Mammary epithelial cell (primary cell): ENCODE measurements at regions of chr4 and their contacts with region 1.

Region 1: DNA sequence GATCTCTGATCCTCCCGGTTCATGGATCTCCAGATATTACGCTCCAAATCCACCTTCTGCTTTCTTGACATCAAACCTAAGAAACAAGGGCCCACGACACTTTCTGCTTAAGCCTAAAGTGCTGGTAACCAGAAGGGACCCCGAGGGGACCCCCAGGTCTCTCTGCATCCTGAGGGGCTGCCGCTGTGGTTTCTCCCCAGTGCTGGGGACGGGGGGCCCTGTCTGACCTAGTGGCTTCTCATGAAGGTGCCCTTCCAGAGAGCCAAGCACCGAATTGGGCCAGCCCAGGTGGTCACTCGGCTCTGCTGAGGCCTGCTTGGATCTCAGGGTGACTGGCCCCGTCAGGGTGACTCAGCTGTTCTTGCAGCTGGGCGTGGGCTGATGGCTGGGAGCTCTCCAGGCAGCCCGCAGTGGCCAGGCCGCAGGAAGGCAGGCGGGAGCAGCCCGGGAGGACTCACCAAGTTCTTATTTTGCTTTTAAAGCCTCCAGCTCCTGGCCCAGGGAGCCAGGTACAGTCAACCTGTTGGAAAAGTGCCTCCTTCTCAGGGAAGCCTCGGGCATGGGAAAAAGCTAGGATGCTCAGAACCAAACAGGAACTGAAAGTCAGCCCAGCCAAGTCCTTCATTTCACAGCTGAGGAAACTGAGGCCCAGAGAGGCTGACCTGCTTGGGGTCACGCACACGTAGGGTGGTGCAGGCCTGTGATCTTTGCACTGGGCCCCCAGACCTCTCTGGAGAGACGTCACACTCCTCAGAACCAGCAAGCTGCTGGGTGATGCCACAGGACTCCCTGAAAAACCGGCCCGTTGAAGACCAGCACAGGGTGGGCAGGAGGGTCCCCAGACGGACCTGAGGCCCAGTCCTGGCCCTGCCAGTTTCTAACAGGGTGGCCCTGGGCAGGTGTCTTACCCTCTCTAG is 16.7 kb downstream of the BLOC1S4 start:
- DNase-seq: peak; percentile 86
- H3K4me3 ChIP-seq: no peak overlapping the region
- H3K27ac ChIP-seq: peak overlapping the region; percentile 70
- H3K4me1 ChIP-seq: peaks cover 13% of the 10 kb centered on the region
- H3K27me3 ChIP-seq: no peaks in the 10 kb centered on the region
- CTCF ChIP-seq: peak in 1 of 2 donors; percentile 22

Region 2: GRCh38 chr4:6390356-6390755 is 342.3 kb before region 1 on chr4:
- CTCF ChIA-PET with region 1: no interaction called
- dilution Hi-C with region 1: no loop called
- in situ Hi-C with region 1: no loop called
- intact Hi-C with region 1: no loop called
- DNase-seq: no peak
- H3K4me3 ChIP-seq: no peak overlapping the region
- H3K27ac ChIP-seq: no peak overlapping the region
- H3K4me1 ChIP-seq: peaks cover 10% of the 10 kb centered on the region
- H3K27me3 ChIP-seq: no peaks in the 10 kb centered on the region
- CTCF ChIP-seq: no peak

Region 3: DNA sequence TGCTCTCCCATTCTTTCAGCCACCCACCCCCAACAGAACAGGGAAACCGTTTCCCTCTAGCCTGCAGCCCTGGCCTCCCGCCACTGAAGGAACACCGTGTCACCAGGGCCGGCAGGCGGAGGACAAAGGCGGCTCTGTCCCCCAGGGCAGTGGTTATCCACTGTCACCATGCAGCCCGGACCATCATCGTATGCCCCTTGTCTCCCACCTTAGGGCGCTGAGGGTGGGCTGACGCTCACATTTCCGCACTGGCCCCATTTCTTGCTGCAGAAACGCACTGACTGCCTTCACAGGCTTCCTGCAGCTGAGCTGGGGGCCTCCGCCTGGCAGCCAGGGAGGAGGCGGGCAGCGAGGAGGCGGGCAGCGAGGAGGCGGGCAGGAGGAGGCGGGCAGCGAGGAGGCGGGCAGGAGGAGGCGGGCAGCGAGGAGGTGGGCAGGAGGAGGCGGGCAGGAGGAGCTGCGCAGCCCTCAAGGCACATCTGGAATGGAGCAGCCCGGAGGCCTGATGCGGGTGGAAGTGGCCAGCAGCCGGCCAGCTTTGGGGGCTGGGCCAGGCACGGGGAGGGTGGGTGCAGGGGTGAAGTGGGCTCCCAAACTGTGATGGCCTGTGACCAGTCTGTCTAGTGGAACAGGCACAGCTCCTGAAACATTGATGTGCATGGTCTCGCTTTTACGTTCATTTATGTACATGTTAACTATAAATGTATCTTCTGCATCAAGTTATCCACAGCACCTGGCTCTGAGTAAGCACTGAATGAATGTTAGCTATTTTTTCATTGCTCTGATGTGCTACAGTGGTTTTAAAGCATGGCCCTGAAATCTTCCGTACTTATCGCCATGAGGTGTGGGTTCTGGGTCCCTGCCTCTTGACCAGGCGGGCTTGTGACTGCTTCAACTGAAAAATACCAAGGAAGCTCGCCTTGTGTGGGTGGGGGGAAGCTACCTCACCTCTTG is 29.2 kb after region 1 on chr4:
- CTCF ChIA-PET with region 1: no interaction called
- dilution Hi-C with region 1: no loop called
- in situ Hi-C with region 1: no loop called
- intact Hi-C with region 1: loop called (anchors 1 kb)
- DNase-seq: no peak
- H3K4me3 ChIP-seq: no peak overlapping the region
- H3K27ac ChIP-seq: no peak overlapping the region
- H3K4me1 ChIP-seq: peaks cover 27% of the 10 kb centered on the region
- H3K27me3 ChIP-seq: peaks cover 3% of the 10 kb centered on the region
- CTCF ChIP-seq: no peak